ENCODE measurements at regions of chr20 and their contacts with region 1.

Region 1: GRCh38 chr20:62065669-62066338 is at the start of gene TAF4:
- DNase-seq: no peak
- ATAC-seq: peak; percentile 68
- H3K4me3 ChIP-seq: peak within 1 kb of the TSS; percentile 91
- H3K27ac ChIP-seq: peak within 1 kb of the TSS; percentile 5
- H3K4me1 ChIP-seq: peaks cover 9% of the 10 kb centered on the region
- H3K27me3 ChIP-seq: no peaks in the 10 kb centered on the region
- CTCF ChIP-seq: no peak
- EP300 ChIP-seq: no peak
- POLR2A ChIP-seq: peak; percentile 96
- RAD21 ChIP-seq: no peak
- polyA plus RNA-seq, gene TAF4: 0.39 to 1.0 TPM

Region 2: GRCh38 chr20:62143118-62143973 is 77.5 kb after region 1 on chr20 and contains the starts of genes PSMA7 and SS18L1:
- CTCF ChIA-PET with region 1: interaction called, 3 read pairs
- POLR2A ChIA-PET with region 1: interaction called, 7 read pairs
- RAD21 ChIA-PET with region 1: interaction called, 3 read pairs
- SMC1A ChIA-PET with region 1: no interaction called
- in situ Hi-C with region 1: no loop called
- intact Hi-C with region 1: loop called (anchors 5 kb)
- DNase-seq: no peak
- ATAC-seq: peak; percentile 88
- H3K4me3 ChIP-seq: peak within 1 kb of the TSS; percentile 93
- H3K27ac ChIP-seq: peak within 1 kb of the TSS; percentile 80
- H3K4me1 ChIP-seq: peaks cover 12% of the 10 kb centered on the region
- H3K27me3 ChIP-seq: no peaks in the 10 kb centered on the region
- CTCF ChIP-seq: no peak
- EP300 ChIP-seq: no peak
- POLR2A ChIP-seq: peak; percentile 92
- RAD21 ChIP-seq: no peak
- polyA plus RNA-seq, gene PSMA7: 333 to 546 TPM
- polyA plus RNA-seq, gene SS18L1: 1.8 to 2.2 TPM

Measured in GM12878 (cell line).